Naive thymus-derived CD4-positive, alpha-beta T cell (primary cell): ENCODE measurements at regions of chr10 and their contacts with region 1.

Region 1: GRCh38 chr10:120423431-120424197 is 33.4 kb upstream of the PLPP4 start:
- DNase-seq: no peak
- ATAC-seq: peak; percentile 56
- H3K4me3 ChIP-seq: no peak overlapping the region
- H3K4me3 Mint-ChIP-seq: no peak overlapping the region
- H3K27ac ChIP-seq: no peak overlapping the region
- H3K27ac Mint-ChIP-seq: no peak overlapping the region
- H3K4me1 ChIP-seq: no peaks in the 10 kb centered on the region
- H3K4me1 Mint-ChIP-seq: no peaks in the 10 kb centered on the region
- H3K27me3 ChIP-seq: no peaks in the 10 kb centered on the region
- H3K27me3 Mint-ChIP-seq: peaks cover 0 to 24% (median 7%) of the 10 kb centered on the region in 5 donors

Region 2: GRCh38 chr10:120735773-120736371 is 312.3 kb after region 1 on chr10:
- CTCF ChIA-PET with region 1: no interaction called
- POLR2A ChIA-PET with region 1: no interaction called
- intact Hi-C with region 1: loop called in 1 of 2 experiments (anchors 2 kb)
- DNase-seq: no peak
- ATAC-seq: no peak
- H3K4me3 ChIP-seq: no peak overlapping the region
- H3K4me3 Mint-ChIP-seq: no peak overlapping the region
- H3K27ac ChIP-seq: no peak overlapping the region
- H3K27ac Mint-ChIP-seq: no peak overlapping the region
- H3K4me1 ChIP-seq: no peaks in the 10 kb centered on the region
- H3K4me1 Mint-ChIP-seq: no peaks in the 10 kb centered on the region
- H3K27me3 ChIP-seq: no peaks in the 10 kb centered on the region
- H3K27me3 Mint-ChIP-seq: peaks cover 0 to 19% (median 14%) of the 10 kb centered on the region in 5 donors